ENCODE measurements at regions of chr9 and their contacts with region 1.

Region 1: GRCh38 chr9:74309654-74310053 is 187.5 kb upstream of the RORB start:
- DNase-seq: no peak
- H3K4me3 ChIP-seq: no peak overlapping the region
- H3K4me3 Mint-ChIP-seq: no peak overlapping the region
- H3K27ac ChIP-seq: no peak overlapping the region
- H3K27ac Mint-ChIP-seq: no peak overlapping the region
- H3K4me1 ChIP-seq: no peaks in the 10 kb centered on the region
- H3K4me1 Mint-ChIP-seq: no peaks in the 10 kb centered on the region
- H3K27me3 ChIP-seq: no peaks in the 10 kb centered on the region
- H3K27me3 Mint-ChIP-seq: no peaks in the 10 kb centered on the region

Region 2: DNA sequence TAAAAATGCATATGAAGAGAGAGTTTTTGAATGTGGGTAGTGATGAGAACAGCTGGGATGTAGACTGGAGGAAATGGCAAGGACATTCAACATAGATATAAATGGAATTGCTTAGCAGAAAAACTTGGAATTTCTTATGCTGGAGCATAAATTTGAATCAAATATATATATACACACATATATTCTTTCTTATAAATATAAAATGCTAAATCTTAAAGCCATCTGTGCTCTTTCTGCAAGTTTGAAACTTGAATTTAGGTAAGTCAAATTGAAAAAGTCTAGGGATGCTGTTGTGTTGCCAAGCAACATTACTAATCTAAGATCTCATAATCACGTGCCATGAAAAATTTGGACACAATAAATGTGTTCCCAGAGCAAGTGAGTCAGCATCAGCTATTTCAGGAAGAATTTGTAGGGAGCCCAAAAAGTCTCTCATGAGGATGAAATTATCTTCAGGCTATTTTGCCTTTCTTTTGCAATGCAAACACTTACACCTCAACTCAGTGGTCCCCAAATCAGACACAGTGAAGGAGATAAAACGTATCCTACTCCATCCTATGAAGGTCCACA is 1298.4 kb before region 1 on chr9:
- CTCF ChIA-PET with region 1: no interaction called
- POLR2A ChIA-PET with region 1: no interaction called
- intact Hi-C with region 1: no loop called
- DNase-seq: no peak
- H3K4me3 ChIP-seq: no peak overlapping the region
- H3K4me3 Mint-ChIP-seq: no peak overlapping the region
- H3K27ac ChIP-seq: no peak overlapping the region
- H3K27ac Mint-ChIP-seq: no peak overlapping the region
- H3K4me1 ChIP-seq: no peaks in the 10 kb centered on the region
- H3K4me1 Mint-ChIP-seq: no peaks in the 10 kb centered on the region
- H3K27me3 ChIP-seq: no peaks in the 10 kb centered on the region
- H3K27me3 Mint-ChIP-seq: peaks cover 22 to 26% of the 10 kb centered on the region in 2 donors

Region 3: GRCh38 chr9:73810585-73811215 is 499.0 kb before region 1 on chr9:
- CTCF ChIA-PET with region 1: no interaction called
- POLR2A ChIA-PET with region 1: no interaction called
- intact Hi-C with region 1: no loop called
- DNase-seq: no peak
- H3K4me3 ChIP-seq: no peak overlapping the region
- H3K4me3 Mint-ChIP-seq: no peak overlapping the region
- H3K27ac ChIP-seq: no peak overlapping the region
- H3K27ac Mint-ChIP-seq: no peak overlapping the region
- H3K4me1 ChIP-seq: no peaks in the 10 kb centered on the region
- H3K4me1 Mint-ChIP-seq: no peaks in the 10 kb centered on the region
- H3K27me3 ChIP-seq: no peaks in the 10 kb centered on the region
- H3K27me3 Mint-ChIP-seq: no peaks in the 10 kb centered on the region

Region 4: DNA sequence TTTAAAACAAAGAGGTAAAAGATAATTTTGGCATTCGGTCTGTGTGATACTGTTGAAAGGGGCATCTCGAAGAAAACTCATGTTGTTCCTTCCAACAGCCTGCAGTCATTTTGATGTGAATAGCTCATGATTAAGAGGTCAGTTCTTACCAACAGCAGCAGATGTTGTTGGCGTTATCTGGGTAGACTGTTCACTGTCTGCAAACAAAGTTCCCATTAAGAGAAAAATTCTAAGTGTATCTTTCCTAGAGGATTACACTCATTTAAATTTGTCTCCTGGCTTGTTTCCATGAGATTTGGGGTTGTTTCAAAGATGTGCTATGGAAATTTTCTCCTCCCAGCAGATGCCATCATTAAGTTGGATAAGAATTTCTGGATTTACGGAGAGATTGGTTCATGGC is 49.3 kb after region 1 on chr9:
- CTCF ChIA-PET with region 1: no interaction called
- POLR2A ChIA-PET with region 1: no interaction called
- intact Hi-C with region 1: loop called (anchors 5 kb)
- DNase-seq: no peak
- H3K4me3 ChIP-seq: no peak overlapping the region
- H3K4me3 Mint-ChIP-seq: no peak overlapping the region
- H3K27ac ChIP-seq: no peak overlapping the region
- H3K27ac Mint-ChIP-seq: no peak overlapping the region
- H3K4me1 ChIP-seq: no peaks in the 10 kb centered on the region
- H3K4me1 Mint-ChIP-seq: no peaks in the 10 kb centered on the region
- H3K27me3 ChIP-seq: no peaks in the 10 kb centered on the region
- H3K27me3 Mint-ChIP-seq: no peaks in the 10 kb centered on the region